ENCODE measurements at regions of chr4 and their contacts with region 1.

Region 1: GRCh38 chr4:95625020-95625419 is 76.2 kb upstream of the UNC5C start:
- DNase-seq: no peak
- H3K4me3 ChIP-seq: no peak overlapping the region
- H3K27ac ChIP-seq: no peak overlapping the region
- H3K4me1 ChIP-seq: 0 out of 4 replicates have a peak, but pooled peaks cover 0 to 5% of the 10 kb centered on the region in 2 experiments
- H3K27me3 ChIP-seq: no peaks in the 10 kb centered on the region
- CTCF ChIP-seq: no peak
- EP300 ChIP-seq: no peak
- RAD21 ChIP-seq: no peak

Region 2: DNA sequence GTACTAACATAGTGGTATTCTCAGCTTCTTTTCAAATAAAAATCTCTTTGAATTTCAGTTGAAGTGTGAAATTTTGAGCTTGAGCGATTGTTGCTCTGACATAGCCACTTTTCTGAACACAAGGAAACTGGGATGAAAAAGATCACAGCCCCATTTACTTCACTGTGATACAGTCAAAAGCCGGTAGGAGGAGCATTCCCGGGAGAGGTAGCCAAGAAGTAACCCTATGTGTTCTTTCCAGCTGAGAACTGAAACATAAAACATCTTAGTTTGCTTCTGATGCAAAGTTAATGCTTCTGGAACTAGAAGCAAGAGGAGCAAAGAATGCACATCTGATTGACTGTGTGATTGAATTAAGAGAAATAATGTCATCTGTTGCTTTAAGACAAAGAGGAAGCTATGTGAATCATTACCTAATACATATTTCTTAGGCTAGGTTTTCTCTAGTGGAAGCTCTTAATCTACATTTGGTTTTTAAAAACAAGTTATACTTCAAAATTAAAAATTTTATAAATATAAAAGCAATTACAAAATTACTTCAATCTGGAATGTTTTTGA is 12.1 kb after region 1 on chr4:
- CTCF ChIA-PET with region 1: interaction called, 23 read pairs
- POLR2A ChIA-PET with region 1: no interaction called
- DNase-seq: peak; percentile 42
- H3K4me3 ChIP-seq: peak overlapping the region in 1 of 2 experiments; percentile 30; a peak in 1 of 4 replicates
- H3K27ac ChIP-seq: peak overlapping the region in 1 of 2 experiments; percentile 9; a peak in 1 of 4 replicates
- H3K4me1 ChIP-seq: peaks cover 4 to 5% of the 10 kb centered on the region in 2 experiments; a peak in 2 of 4 replicates
- H3K27me3 ChIP-seq: no peaks in the 10 kb centered on the region
- CTCF ChIP-seq: peak; percentile 65
- EP300 ChIP-seq: no peak
- RAD21 ChIP-seq: peak; percentile 52

Region 3: DNA sequence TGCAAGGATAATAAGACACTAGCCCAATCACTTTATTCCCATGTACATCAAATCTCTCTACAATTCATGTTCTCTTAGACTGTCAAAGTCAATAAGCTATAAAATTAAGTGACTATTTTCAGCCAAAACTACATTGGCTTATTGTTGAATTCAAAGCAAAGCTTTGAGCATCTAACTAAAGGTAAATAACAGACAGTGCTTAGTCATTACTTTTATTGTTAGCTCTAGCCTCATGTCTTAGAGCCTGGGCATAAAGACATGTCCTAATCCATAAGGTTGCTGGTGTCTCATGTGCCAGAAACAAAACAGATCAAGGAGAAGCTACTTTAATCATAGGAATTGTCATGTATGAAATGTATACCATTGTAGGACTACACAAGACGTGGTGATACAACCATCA is 26.9 kb after region 1 on chr4:
- CTCF ChIA-PET with region 1: no interaction called
- POLR2A ChIA-PET with region 1: no interaction called
- DNase-seq: no peak
- H3K4me3 ChIP-seq: no peak overlapping the region
- H3K27ac ChIP-seq: no peak overlapping the region
- H3K4me1 ChIP-seq: no peaks in the 10 kb centered on the region
- H3K27me3 ChIP-seq: no peaks in the 10 kb centered on the region
- CTCF ChIP-seq: no peak
- EP300 ChIP-seq: no peak
- RAD21 ChIP-seq: no peak

Measured in SK-N-SH (cell line).